Panc1 (cell line): ENCODE measurements at regions of chr1 and their contacts with region 1.

Region 1: DNA sequence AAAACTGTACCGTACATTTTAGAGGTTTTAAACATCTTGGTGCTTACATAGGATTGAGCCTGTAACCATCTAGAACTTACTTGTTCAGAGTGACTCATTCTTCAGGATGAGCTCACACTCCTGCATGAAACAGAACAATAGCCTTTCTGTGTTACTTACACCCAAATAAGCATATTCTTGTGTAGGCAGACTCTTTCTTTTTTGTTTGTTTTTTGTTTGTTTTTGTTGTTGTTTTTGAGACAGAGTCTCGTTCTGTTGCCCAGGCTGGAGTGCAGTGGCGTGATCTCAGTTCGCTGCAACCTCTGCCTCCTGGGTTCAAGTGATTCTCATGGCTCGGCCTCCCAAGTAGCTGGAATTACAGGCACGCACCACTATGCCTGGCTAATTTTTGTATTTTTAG is 3.8 kb upstream of the CA6 start:
- DNase-seq: peak; percentile 58
- ATAC-seq: peak; percentile 95
- H3K4me3 ChIP-seq: no peak overlapping the region
- H3K27ac ChIP-seq: no peak overlapping the region
- H3K4me1 ChIP-seq: peaks cover 14% of the 10 kb centered on the region
- H3K27me3 ChIP-seq: no peaks in the 10 kb centered on the region
- CTCF ChIP-seq: no peak

Region 2: GRCh38 chr1:9166289-9167235 is 224.7 kb after region 1 on chr1:
- CTCF ChIA-PET with region 1: no interaction called
- POLR2A ChIA-PET with region 1: no interaction called
- in situ Hi-C with region 1: no loop called
- intact Hi-C with region 1: no loop called
- DNase-seq: no peak
- ATAC-seq: no peak
- H3K4me3 ChIP-seq: no peak overlapping the region
- H3K27ac ChIP-seq: 0 out of 2 replicates have a peak overlapping the region, but pooled peaks have one; percentile 36
- H3K4me1 ChIP-seq: peaks cover 37% of the 10 kb centered on the region
- H3K27me3 ChIP-seq: no peaks in the 10 kb centered on the region
- CTCF ChIP-seq: no peak

Region 3: GRCh38 chr1:9201401-9202239 is 259.7 kb after region 1 on chr1:
- CTCF ChIA-PET with region 1: no interaction called
- POLR2A ChIA-PET with region 1: interaction called, 10 read pairs
- in situ Hi-C with region 1: no loop called
- intact Hi-C with region 1: no loop called
- DNase-seq: no peak
- ATAC-seq: peak; percentile 37
- H3K4me3 ChIP-seq: peak overlapping the region; percentile 31 to 53
- H3K27ac ChIP-seq: no peak overlapping the region
- H3K4me1 ChIP-seq: peaks cover 28% of the 10 kb centered on the region
- H3K27me3 ChIP-seq: 0 out of 2 replicates have a peak, but pooled peaks cover 4% of the 10 kb centered on the region
- CTCF ChIP-seq: no peak